Activated naive CD4-positive, alpha-beta T cell treated with anti-CD3 and anti-CD28 coated beads for 36 hours (primary cell): ENCODE measurements at regions of chr3 and their contacts with region 1.

Region 1: GRCh38 chr3:72996473-72997333 is at the start of gene PPP4R2:
- DNase-seq: peak; percentile 90
- H3K4me3 Mint-ChIP-seq: peak within 1 kb of the TSS; percentile 86
- H3K27ac Mint-ChIP-seq: peak within 1 kb of the TSS; percentile 88
- H3K4me1 Mint-ChIP-seq: peaks cover 38% of the 10 kb centered on the region
- H3K27me3 Mint-ChIP-seq: no peaks in the 10 kb centered on the region
- total RNA-seq, gene PPP4R2: 68.1 to 71.6 TPM

Region 2: GRCh38 chr3:72938471-72939265 is 58.0 kb before region 1 on chr3:
- CTCF ChIA-PET with region 1: interaction called, 3 read pairs
- intact Hi-C with region 1: loop called (anchors 1 kb)
- DNase-seq: peak; percentile 26
- H3K4me3 Mint-ChIP-seq: no peak overlapping the region
- H3K27ac Mint-ChIP-seq: no peak overlapping the region
- H3K4me1 Mint-ChIP-seq: no peaks in the 10 kb centered on the region
- H3K27me3 Mint-ChIP-seq: no peaks in the 10 kb centered on the region

Region 3: DNA sequence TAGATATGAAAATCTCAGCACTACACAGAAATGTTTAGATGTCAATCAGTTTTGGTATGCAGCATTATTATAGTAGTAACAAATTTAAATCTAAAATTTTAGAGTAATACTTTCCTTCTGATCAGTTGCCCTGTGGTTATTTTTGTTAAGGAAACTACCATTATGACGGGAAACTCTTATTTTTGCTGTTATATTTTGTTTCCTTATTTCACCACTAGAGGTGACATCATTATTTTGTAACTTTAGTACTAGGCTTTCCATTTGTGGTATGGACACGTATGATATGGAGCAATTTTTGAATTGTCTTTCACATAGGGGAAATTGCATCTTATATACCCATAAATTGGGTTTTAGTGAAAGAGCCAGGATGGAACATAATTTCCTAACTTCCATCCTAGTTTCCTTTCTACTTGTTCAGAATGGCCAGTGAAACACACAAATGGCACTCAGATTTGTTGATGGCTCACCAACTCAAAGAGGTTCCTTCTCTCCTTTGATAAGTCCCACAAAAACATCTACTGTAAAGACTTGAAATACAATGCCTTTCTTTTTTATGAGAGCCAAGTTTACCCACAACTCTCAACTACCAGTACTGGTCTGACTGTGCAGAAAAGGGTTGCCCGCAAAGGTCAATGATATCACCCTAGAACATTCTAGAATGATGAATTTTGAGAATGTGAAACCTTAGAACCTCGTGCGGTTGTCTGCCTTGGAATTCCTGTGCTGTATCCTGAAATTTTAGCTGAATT is 19.5 kb before region 1 on chr3:
- CTCF ChIA-PET with region 1: interaction called, 4 read pairs
- intact Hi-C with region 1: loop called (anchors 1 kb)
- DNase-seq: peak; percentile 21
- H3K4me3 Mint-ChIP-seq: no peak overlapping the region
- H3K27ac Mint-ChIP-seq: no peak overlapping the region
- H3K4me1 Mint-ChIP-seq: peaks cover 10% of the 10 kb centered on the region
- H3K27me3 Mint-ChIP-seq: no peaks in the 10 kb centered on the region

Region 4: DNA sequence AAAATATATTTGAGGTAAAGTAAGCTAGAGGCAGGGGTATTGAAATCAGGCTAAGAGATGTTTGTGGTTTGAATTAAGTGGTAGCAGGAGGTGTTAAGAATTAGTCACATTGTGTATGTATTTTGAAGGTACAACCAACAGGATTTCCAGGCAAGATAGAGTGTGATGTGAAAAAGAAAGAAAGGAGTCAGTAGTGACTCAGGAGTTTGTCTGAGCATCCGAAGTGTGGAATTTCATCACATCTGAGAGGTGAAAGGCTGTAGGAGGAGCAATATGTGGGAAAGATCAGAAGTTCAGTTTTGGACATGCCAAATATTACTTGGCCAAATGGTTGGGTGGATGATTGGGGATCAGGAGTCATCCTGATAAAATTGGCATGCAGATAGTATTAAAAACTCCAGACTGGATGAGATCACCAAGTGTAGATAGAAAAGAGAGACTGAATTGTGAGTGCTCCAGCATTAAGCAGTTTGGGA is 32.7 kb after region 1 on chr3:
- CTCF ChIA-PET with region 1: interaction called, 3 read pairs
- intact Hi-C with region 1: loop called (anchors 1 kb)
- DNase-seq: no peak
- H3K4me3 Mint-ChIP-seq: no peak overlapping the region
- H3K27ac Mint-ChIP-seq: peak overlapping the region; percentile 10
- H3K4me1 Mint-ChIP-seq: peaks cover 80% of the 10 kb centered on the region
- H3K27me3 Mint-ChIP-seq: no peaks in the 10 kb centered on the region

Region 5: DNA sequence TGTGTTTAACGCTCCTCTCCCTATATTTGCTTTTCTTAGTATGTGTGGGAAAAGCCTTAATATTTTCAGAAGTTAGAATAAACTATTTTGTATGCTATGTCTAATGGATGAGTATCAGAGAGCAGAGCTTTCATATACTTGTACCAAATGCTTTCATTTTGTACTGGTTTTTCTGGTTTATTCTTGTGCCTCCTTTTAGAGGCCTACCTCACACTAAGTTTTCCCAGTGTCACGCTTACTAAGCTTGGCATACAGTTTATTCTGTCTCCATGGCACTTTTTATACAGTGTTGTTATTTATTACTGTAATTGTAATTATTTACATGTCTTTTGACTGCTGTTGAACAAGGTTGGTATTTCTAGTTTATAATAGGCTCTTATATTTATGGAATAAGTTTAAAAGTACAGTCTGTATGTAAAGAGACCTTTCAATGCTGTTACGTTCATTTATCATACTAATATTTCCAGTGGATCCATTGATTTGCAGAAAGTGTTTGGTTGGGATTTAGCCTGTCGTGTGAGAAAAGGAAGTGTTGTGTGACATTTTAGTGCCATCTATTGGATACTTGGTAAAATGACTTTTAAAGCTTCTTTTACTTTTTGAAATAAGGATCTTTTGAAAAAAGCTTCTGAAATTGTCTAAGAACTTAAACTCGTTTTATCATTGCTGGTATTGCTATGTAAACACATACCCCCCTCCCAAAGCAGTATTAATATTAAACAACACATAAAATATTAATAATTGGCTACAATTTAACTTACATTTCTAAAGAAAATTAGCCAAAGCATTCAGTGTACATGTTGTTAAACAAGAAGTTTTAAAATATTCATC is 59.5 kb after region 1 on chr3:
- CTCF ChIA-PET with region 1: interaction called, 18 read pairs
- intact Hi-C with region 1: loop called (anchors 1 kb)
- DNase-seq: no peak
- H3K4me3 Mint-ChIP-seq: no peak overlapping the region
- H3K27ac Mint-ChIP-seq: no peak overlapping the region
- H3K4me1 Mint-ChIP-seq: peaks cover 17% of the 10 kb centered on the region
- H3K27me3 Mint-ChIP-seq: no peaks in the 10 kb centered on the region